ENCODE measurements at regions of chr4 and their contacts with region 1.

Region 1: GRCh38 chr4:184263910-184264732 is 46.4 kb upstream of the ENPP6 start:
- DNase-seq: peak; percentile 98
- H3K4me3 ChIP-seq: no peak overlapping the region
- H3K27ac ChIP-seq: no peak overlapping the region
- H3K4me1 ChIP-seq: peaks cover 27% of the 10 kb centered on the region
- H3K27me3 ChIP-seq: no peaks in the 10 kb centered on the region

Region 2: GRCh38 chr4:183783991-183784553 is 480.0 kb before region 1 on chr4:
- in situ Hi-C with region 1: no loop called
- DNase-seq: peak; percentile 82
- H3K4me3 ChIP-seq: no peak overlapping the region
- H3K27ac ChIP-seq: no peak overlapping the region
- H3K4me1 ChIP-seq: 0 out of 2 replicates have a peak, but pooled peaks cover 3% of the 10 kb centered on the region
- H3K27me3 ChIP-seq: no peaks in the 10 kb centered on the region

Region 3: DNA sequence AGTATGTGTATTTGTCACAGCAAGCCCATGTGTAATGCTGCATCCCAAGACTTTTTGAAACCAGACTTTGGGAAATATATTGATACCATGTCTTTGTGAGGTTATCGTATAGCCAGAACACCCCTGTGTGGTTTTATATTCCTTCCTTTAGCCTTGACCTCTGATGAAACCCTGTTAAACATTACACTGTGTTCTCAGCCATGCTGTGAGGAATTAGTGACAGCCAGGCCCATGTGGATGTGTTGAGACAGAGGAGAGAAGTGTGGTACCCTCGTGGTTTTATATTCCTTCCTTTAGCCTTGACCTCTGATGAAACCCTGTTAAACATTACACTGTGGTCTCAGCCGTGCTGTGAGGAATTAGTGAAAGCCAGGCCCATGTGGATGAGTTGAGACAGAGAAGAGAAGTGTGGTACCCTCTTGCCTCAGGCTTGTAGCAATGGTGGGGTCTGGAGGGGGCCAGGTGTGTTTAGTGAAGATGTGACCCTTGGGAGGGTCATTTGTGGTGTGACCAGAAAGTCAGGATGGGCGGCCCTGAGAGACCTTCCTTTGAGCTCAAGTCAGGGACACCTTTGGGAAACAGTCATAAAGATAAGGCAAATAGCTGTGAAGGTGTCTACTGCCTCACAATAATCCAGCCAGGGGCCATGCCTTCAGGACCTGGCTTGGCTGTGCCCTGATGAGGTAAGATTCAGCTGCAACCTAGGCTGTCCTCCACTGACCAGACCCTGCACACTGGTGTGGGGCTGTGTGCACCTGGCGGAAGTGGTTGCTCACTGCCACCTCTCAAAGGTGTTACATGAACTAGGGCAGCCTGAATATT is 100.2 kb after region 1 on chr4:
- in situ Hi-C with region 1: no loop called
- DNase-seq: no peak
- H3K4me3 ChIP-seq: no peak overlapping the region
- H3K27ac ChIP-seq: no peak overlapping the region
- H3K4me1 ChIP-seq: peaks cover 6% of the 10 kb centered on the region
- H3K27me3 ChIP-seq: no peaks in the 10 kb centered on the region

Region 4: DNA sequence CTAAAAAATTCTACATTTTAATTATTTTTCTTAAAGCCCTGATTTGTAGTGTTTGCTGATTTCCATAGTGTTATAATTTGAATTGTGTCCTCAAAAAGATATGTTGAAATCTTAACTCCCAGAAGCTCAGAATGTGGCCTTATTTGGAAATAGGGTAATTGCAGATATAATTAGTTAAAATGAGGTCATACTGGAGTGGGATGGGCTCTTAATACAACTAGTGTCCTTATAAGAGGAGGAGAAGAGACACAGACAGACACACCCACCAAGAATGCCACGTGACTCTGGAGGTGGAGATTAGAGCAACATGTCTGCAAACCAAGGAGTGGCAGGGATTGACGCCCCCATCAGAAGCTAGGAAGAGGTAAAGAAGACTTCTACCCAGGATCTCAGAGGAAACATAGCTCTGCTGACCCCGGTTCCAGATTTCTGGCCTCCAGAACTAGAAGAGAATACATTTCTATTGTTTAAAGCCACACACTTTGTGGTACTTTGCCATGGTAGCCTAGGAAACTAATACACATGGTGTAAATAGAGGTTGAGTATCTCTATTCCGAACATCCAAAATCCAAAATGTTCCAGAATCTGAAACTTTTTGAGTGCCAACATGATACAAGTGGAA is 280.8 kb after region 1 on chr4:
- in situ Hi-C with region 1: loop called (anchors 10 kb)
- DNase-seq: peak; percentile 3
- H3K4me3 ChIP-seq: no peak overlapping the region
- H3K27ac ChIP-seq: no peak overlapping the region
- H3K4me1 ChIP-seq: no peaks in the 10 kb centered on the region
- H3K27me3 ChIP-seq: no peaks in the 10 kb centered on the region